GM18951 (cell line): ENCODE measurements at regions of chr2 and their contacts with region 1.

Region 1: DNA sequence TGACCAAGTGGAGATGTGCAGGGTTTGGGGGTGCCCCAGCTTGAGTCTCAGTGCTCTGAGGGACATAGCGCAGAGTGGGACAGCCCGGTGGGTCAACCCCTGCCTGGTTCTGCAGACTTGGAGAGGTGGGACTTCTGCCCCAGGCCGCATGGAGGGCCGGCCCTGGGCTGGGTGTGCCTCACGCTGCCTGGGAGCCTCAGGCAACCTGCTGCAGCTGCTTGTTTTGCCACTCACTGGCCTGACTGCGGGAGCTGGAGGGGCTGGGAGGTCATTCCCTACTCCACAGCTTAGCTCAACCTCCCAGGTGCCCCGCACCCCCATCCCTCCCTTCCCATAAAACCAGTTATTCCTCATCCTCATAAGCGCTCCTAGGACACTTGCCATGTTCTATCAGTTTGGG is 33.1 kb downstream of the ODC1 start:
- POLR2A ChIP-seq: no peak

Region 2: DNA sequence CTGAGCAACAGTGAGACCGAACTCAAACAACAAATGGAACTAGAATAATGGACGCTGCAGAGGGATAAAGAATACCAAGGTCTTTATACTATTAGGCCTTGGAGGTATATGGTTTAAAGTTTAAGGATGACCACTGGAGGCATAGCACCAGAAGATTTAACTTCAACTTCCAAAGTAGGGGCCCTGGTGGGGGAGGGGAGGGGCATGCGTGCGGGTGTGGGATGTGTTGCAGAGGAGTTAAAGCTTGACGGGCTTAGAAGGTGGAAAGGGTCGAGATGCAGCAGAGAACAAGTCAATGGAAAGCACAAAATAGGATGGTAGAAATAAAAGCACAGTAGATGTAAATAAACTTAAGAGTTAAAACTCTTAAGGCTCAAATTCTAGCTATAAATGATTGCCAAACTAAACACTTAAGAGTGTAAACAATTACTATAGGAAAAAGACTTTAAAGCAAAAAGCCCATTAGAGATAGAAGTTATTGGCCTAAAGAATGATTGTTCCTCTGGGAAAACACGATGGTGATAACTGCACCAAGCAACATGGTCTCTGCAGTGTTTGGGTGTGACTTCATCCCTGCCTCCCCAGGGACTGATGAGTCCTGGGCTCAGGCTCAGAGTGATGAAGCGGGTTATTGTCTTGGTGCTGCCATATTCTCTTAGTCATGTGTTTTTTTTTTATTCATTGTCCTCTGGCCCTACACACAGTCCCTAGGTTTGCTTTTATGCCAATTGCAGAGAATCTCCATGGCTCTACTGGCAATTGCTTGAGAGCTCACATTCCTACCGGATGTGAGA is 279.6 kb before region 1 on chr2:
- in situ Hi-C with region 1: loop called (anchors 5 kb)
- POLR2A ChIP-seq: peak; percentile 35